ENCODE measurements at regions of chr14 and their contacts with region 1.

Region 1: DNA sequence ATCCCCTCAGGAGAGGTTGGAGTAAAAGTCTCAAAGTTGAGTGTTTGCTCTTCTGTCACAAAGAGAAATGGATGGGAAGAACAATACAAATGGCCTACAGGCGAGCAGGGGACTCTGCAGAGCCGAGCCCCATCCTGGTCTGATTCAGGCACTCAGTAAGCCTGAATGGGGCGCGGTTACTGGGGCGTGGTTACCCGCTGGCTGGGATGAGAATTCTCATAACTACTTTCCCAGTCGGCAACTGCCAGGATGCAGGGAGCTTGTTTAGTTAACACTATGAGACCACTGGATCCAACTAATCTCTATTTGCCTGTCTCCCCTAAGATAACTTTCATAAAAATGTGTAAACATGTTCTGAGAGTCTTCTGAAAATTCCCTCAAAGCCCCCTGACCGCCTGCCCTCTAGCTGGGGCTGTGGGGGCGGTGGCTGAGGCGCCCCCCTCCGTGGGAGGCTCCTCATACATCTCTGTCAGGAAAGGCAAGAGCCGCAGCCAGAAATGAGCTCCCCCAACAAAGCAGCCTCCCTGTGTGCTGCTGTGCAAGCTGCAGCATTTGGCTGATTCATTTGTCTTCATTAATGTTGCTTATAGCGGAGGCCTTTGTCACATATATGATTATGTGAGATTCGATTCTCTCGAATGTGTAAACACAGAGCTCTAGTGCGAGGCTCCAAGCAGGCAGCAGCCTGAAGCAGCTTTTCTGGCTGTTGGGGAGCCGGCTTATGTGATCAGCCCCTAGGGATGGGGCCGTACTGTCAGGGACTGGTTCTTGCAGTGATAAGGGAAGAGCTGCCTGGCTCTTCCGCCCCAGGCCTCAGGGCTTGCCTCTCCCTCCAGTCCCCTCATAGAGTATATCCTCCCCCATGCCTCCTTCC is 126.1 kb upstream of the ARHGAP5 start:
- DNase-seq: peak; percentile 22 to 37 (median 33)
- ATAC-seq: peak; percentile 80
- H3K4me3 ChIP-seq: no peak overlapping the region
- H3K27ac ChIP-seq: no peak overlapping the region; the same call in 2 of the 3 replicates
- H3K4me1 ChIP-seq: peaks cover 8 to 16% of the 10 kb centered on the region in 2 experiments; a peak in 4 of 5 replicates
- H3K27me3 ChIP-seq: no peaks in the 10 kb centered on the region
- CTCF ChIP-seq: no peak
- EP300 ChIP-seq: no peak
- POLR2A ChIP-seq: no peak
- RAD21 ChIP-seq: no peak

Region 2: GRCh38 chr14:31435276-31435675 is 515.7 kb before region 1 on chr14:
- CTCF ChIA-PET with region 1: no interaction called
- POLR2A ChIA-PET with region 1: no interaction called
- in situ Hi-C with region 1: no loop called
- intact Hi-C with region 1: no loop called
- DNase-seq: no peak
- ATAC-seq: no peak
- H3K4me3 ChIP-seq: no peak overlapping the region
- H3K27ac ChIP-seq: no peak overlapping the region
- H3K4me1 ChIP-seq: no peaks in the 10 kb centered on the region
- H3K27me3 ChIP-seq: no peaks in the 10 kb centered on the region
- CTCF ChIP-seq: no peak
- EP300 ChIP-seq: no peak
- POLR2A ChIP-seq: no peak
- RAD21 ChIP-seq: no peak

Region 3: DNA sequence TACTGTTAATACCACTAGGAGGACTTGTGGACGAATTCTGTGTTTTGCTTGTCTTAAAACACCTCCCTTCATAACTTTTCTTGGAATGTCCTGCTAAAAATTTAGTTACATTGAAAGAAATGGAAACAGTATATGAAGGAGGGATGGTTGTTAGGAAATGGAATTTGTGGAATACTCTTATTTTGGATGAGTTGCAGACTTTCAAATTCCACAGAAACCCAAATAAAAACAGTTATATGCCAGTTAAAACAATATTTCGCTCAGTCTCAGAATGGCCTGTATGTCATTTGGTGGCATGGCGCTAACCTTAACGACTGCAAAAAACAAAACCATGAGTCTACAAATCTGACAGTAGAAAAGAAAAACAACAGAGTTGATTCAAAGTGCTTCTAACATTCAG is 113.9 kb after region 1 on chr14:
- CTCF ChIA-PET with region 1: no interaction called
- POLR2A ChIA-PET with region 1: no interaction called
- in situ Hi-C with region 1: no loop called
- intact Hi-C with region 1: loop called (anchors 5 kb)
- DNase-seq: no peak
- ATAC-seq: no peak
- H3K4me3 ChIP-seq: no peak overlapping the region
- H3K27ac ChIP-seq: no peak overlapping the region
- H3K4me1 ChIP-seq: no peaks in the 10 kb centered on the region
- H3K27me3 ChIP-seq: no peaks in the 10 kb centered on the region
- CTCF ChIP-seq: no peak
- EP300 ChIP-seq: no peak
- POLR2A ChIP-seq: no peak
- RAD21 ChIP-seq: no peak